PC-9 (cell line): ENCODE measurements at regions of chr21 and their contacts with region 1.

Region 1: GRCh38 chr21:34671891-34672290 is 3.1 kb downstream of the CLIC6 start:
- DNase-seq: no peak
- H3K4me3 ChIP-seq: no peak overlapping the region
- H3K27ac ChIP-seq: no peak overlapping the region
- H3K4me1 ChIP-seq: no peaks in the 10 kb centered on the region
- H3K27me3 ChIP-seq: peaks cover 22% of the 10 kb centered on the region
- CTCF ChIP-seq: no peak

Region 2: GRCh38 chr21:34367321-34367935 is 304.5 kb before region 1 on chr21:
- CTCF ChIA-PET with region 1: interaction called, 16 read pairs
- POLR2A ChIA-PET with region 1: no interaction called
- intact Hi-C with region 1: no loop called
- DNase-seq: peak; percentile 57 to 80
- H3K4me3 ChIP-seq: no peak overlapping the region
- H3K27ac ChIP-seq: no peak overlapping the region
- H3K4me1 ChIP-seq: no peaks in the 10 kb centered on the region
- H3K27me3 ChIP-seq: no peaks in the 10 kb centered on the region
- CTCF ChIP-seq: peak; percentile 76

Region 3: GRCh38 chr21:34559089-34559631 is 112.7 kb before region 1 on chr21:
- CTCF ChIA-PET with region 1: no interaction called
- POLR2A ChIA-PET with region 1: no interaction called
- intact Hi-C with region 1: no loop called
- DNase-seq: no peak
- H3K4me3 ChIP-seq: no peak overlapping the region
- H3K27ac ChIP-seq: no peak overlapping the region
- H3K4me1 ChIP-seq: no peaks in the 10 kb centered on the region
- H3K27me3 ChIP-seq: no peaks in the 10 kb centered on the region
- CTCF ChIP-seq: no peak